CD8-positive, alpha-beta memory T cell (primary cell): ENCODE measurements at regions of chr9 and their contacts with region 1.

Region 1: GRCh38 chr9:69421908-69422801 is 97.1 kb downstream of the ENTREP1 start:
- DNase-seq: peak in 3 of 5 donors; percentile 12 to 36 (median 29)
- H3K4me3 ChIP-seq: no peak overlapping the region
- H3K4me3 Mint-ChIP-seq: no peak overlapping the region
- H3K27ac ChIP-seq: no peak overlapping the region
- H3K27ac Mint-ChIP-seq: no peak overlapping the region
- H3K4me1 ChIP-seq: no peaks in the 10 kb centered on the region
- H3K4me1 Mint-ChIP-seq: peaks cover 0 to 4% (median 1%) of the 10 kb centered on the region in 3 donors
- H3K27me3 ChIP-seq: no peaks in the 10 kb centered on the region
- H3K27me3 Mint-ChIP-seq: peaks cover 3 to 14% of the 10 kb centered on the region in 2 donors

Region 2: GRCh38 chr9:69276775-69277174 is 145.4 kb before region 1 on chr9:
- CTCF ChIA-PET with region 1: no interaction called
- POLR2A ChIA-PET with region 1: no interaction called
- DNase-seq: no peak
- H3K4me3 ChIP-seq: no peak overlapping the region
- H3K4me3 Mint-ChIP-seq: no peak overlapping the region
- H3K27ac ChIP-seq: no peak overlapping the region
- H3K27ac Mint-ChIP-seq: no peak overlapping the region
- H3K4me1 ChIP-seq: no peaks in the 10 kb centered on the region
- H3K4me1 Mint-ChIP-seq: no peaks in the 10 kb centered on the region
- H3K27me3 ChIP-seq: no peaks in the 10 kb centered on the region
- H3K27me3 Mint-ChIP-seq: peaks cover 4 to 26% of the 10 kb centered on the region in 2 donors

Region 3: GRCh38 chr9:69798744-69799143 is 376.6 kb after region 1 on chr9:
- CTCF ChIA-PET with region 1: no interaction called
- POLR2A ChIA-PET with region 1: no interaction called
- DNase-seq: no peak
- H3K4me3 ChIP-seq: no peak overlapping the region
- H3K4me3 Mint-ChIP-seq: no peak overlapping the region
- H3K27ac ChIP-seq: no peak overlapping the region
- H3K27ac Mint-ChIP-seq: no peak overlapping the region
- H3K4me1 ChIP-seq: no peaks in the 10 kb centered on the region
- H3K4me1 Mint-ChIP-seq: no peaks in the 10 kb centered on the region
- H3K27me3 ChIP-seq: no peaks in the 10 kb centered on the region
- H3K27me3 Mint-ChIP-seq: peaks cover 0 to 32% of the 10 kb centered on the region in 2 donors

Region 4: DNA sequence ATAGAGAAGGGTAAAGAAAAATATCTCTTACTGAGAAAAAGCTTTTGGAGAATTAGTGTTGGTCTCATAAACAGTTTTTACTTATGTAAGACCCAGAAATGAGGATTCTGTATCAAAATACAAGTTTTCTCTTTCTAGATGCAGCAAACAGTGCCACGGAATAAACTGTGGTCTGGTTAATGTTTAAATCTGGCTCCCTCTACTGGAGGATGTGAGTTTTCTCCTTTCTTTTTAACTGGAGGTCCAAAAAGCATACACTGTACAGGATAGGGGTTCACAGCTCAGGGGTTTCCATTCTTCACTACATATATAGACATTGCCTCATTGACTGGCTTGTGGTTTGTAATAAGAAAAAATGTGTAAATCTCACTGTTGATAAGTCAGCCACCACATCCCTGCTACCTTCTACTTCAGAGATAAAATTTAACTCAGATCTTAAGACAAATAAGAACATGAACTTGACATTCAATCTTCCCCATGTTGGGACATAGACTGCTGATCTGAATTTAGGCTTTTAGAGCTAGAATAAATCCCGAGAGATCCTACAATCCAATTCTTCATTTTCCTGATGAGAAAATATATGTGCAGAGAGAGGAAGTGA is 497.4 kb after region 1 on chr9:
- CTCF ChIA-PET with region 1: interaction called, 12 read pairs
- POLR2A ChIA-PET with region 1: no interaction called
- DNase-seq: peak in 2 of 5 donors; percentile 11 to 32
- H3K4me3 ChIP-seq: no peak overlapping the region
- H3K4me3 Mint-ChIP-seq: no peak overlapping the region
- H3K27ac ChIP-seq: no peak overlapping the region
- H3K27ac Mint-ChIP-seq: no peak overlapping the region
- H3K4me1 ChIP-seq: no peaks in the 10 kb centered on the region
- H3K4me1 Mint-ChIP-seq: no peaks in the 10 kb centered on the region
- H3K27me3 ChIP-seq: no peaks in the 10 kb centered on the region
- H3K27me3 Mint-ChIP-seq: peaks cover 6 to 10% of the 10 kb centered on the region in 2 donors